PC-3 (cell line): ENCODE measurements at regions of chr6 and their contacts with region 1.

Region 1: DNA sequence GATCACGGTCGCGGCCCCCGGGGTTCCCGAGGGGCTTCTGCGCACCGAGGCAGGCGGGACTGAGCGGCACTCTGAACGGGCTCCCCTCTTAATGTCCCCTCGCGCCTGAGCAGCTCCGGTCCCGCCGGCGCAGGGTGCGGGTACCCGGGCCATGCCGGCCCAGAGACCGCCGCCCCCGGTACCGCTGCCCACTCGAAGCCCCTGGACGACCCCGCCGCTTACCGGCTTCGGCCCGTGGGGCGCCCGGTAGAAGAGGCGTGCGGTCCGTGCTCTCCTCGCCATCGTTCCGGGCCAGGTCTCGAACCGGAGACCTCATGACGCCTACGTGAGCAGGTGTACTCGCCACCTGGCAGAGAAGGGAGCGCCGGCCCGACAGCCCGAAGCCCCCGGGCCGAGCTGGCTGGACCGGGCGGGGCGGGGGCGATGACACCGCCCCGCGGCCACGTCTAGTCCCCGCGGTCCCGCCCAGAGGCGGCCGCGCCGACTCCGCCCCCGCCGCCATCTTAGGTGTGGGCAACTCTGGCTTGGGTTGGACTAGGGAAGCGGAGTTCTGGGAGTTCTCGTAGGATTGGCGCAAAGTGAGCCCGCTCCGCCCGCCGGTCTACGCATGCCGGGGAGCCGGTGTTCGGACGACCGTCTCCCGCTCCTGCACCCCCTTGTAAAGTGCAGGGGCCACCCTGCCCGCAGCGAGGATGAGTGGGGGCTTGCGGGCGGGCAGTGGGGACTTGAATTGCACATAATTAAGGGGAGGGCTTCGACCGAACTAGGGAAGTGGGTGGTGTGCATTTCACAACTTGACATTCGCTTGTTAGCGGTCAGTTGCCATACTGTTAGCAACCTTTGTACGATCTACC is at the start of gene SLC17A5:
- DNase-seq: peak; percentile 91
- ATAC-seq: peak; percentile 89
- H3K4me3 ChIP-seq: peak within 1 kb of the TSS; percentile 92
- H3K27ac ChIP-seq: peak within 1 kb of the TSS; percentile 60
- H3K4me1 ChIP-seq: peaks cover 28% of the 10 kb centered on the region
- H3K27me3 ChIP-seq: no peaks in the 10 kb centered on the region
- CTCF ChIP-seq: no peak
- total RNA-seq, gene SLC17A5: 3.3 and 5.2 TPM in 2 replicates

Region 2: DNA sequence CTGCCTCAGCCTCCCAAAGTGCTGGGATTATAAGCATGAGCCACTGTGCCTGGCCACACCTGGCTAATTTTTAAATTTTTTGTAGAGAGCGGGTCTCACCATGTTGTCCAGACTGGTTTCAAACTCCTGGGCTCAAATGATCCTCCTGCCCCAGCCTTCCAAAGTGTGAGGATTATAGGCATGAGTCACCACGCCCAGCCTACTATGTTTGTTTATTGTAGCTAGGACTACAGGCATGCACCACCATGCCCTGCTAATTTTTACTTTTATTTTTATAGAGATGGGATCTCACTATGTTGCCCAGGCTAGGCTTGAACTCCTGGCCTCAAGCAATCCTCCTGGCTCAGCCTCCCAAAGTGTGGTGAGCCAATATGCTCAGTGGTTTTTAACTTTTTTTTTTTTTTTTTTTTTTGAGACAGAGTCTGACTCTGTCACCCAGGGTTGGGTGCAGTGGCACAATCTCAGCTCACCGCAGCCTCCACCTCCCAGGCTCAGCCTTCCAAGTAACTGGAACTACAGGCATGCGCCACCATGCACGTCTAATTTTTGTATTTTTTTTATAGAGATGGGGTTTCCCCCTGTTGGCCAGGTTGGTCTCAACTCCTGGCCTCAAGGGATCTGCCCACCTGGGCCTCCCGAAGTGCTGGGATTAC is 271.2 kb before region 1 on chr6:
- CTCF ChIA-PET with region 1: no interaction called
- POLR2A ChIA-PET with region 1: interaction called, 17 read pairs
- intact Hi-C with region 1: no loop called
- DNase-seq: peak; percentile 37
- ATAC-seq: no peak
- H3K4me3 ChIP-seq: no peak overlapping the region
- H3K27ac ChIP-seq: no peak overlapping the region
- H3K4me1 ChIP-seq: no peaks in the 10 kb centered on the region
- H3K27me3 ChIP-seq: no peaks in the 10 kb centered on the region
- CTCF ChIP-seq: no peak

Region 3: GRCh38 chr6:73832313-73832712 is 178.5 kb after region 1 on chr6:
- CTCF ChIA-PET with region 1: no interaction called
- POLR2A ChIA-PET with region 1: no interaction called
- intact Hi-C with region 1: no loop called
- DNase-seq: no peak
- ATAC-seq: no peak
- H3K4me3 ChIP-seq: no peak overlapping the region
- H3K27ac ChIP-seq: no peak overlapping the region
- H3K4me1 ChIP-seq: no peaks in the 10 kb centered on the region
- H3K27me3 ChIP-seq: no peaks in the 10 kb centered on the region
- CTCF ChIP-seq: no peak